Activated T-helper 1 cell treated with anti-CD3 and anti-CD28 coated beads, Interleukin-12 subunit alpha, Interleukin-12 subunit beta, Interleukin-2, Interleukin-4 antibody, amounts not matched to agents 30 ng/mL and 10 ng/mL and 1 ng/mL, durations not matched to agents 14 hours and 24 hours and 36 hours (primary cell): ENCODE measurements at regions of chr16 and their contacts with region 1.

Region 1: DNA sequence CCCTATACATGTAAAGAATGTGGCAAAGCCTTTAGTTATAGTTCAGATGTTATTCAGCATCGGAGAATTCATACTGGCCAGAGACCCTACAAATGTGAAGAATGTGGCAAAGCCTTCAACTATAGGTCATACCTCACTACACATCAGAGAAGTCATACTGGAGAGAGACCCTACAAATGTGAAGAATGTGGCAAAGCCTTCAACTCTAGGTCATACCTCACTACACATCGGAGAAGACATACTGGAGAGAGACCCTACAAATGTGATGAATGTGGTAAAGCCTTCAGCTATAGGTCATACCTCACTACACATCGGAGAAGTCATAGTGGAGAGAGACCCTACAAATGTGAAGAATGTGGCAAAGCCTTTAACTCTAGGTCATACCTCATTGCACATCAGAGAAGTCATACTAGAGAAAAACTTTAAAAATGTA is 42.5 kb downstream of the ZNF267 start:
- DNase-seq: no peak
- H3K4me3 Mint-ChIP-seq: no peak overlapping the region
- H3K27ac Mint-ChIP-seq: peak overlapping the region; percentile 68
- H3K4me1 Mint-ChIP-seq: peaks cover 13% of the 10 kb centered on the region
- H3K27me3 Mint-ChIP-seq: no peaks in the 10 kb centered on the region

Region 2: GRCh38 chr16:31819386-31819785 is 96.7 kb before region 1 on chr16:
- intact Hi-C with region 1: no loop called
- DNase-seq: no peak
- H3K4me3 Mint-ChIP-seq: no peak overlapping the region
- H3K27ac Mint-ChIP-seq: no peak overlapping the region
- H3K4me1 Mint-ChIP-seq: no peaks in the 10 kb centered on the region
- H3K27me3 Mint-ChIP-seq: peaks cover 5% of the 10 kb centered on the region

Region 3: DNA sequence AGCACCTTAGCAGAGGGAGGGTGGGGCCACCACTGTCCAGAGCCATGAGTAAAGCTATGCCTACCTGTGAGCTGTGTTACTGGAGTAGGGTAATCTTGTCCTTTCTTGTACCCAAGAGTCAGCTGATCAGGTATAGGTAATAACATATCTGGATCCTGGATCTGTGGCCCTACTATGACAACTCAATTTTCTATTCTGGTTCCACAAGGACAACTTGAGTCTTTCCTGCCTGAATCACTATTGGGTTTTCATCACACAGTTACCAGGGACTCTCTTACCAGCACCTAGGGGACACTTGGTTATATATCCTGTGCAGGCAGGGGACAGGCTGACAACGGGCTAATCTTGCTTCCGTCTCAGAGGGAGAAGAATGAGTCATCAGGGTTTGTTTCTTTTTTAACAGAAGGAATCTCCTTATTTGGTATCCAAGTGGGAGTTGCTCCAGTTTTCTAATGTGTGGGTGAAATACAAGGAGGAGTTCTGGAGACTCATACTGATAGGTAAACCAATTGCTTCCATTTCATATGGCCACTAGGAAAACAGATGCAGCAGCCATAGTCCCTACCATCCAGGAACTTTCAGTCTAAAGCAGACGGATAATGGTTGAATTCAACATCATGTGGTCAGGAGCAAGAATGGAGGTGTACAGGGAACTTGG is 35.6 kb before region 1 on chr16:
- intact Hi-C with region 1: loop called (anchors 5 kb)
- DNase-seq: peak; percentile 46
- H3K4me3 Mint-ChIP-seq: peak overlapping the region; percentile 96
- H3K27ac Mint-ChIP-seq: peak overlapping the region; percentile 84
- H3K4me1 Mint-ChIP-seq: peaks cover 77% of the 10 kb centered on the region
- H3K27me3 Mint-ChIP-seq: no peaks in the 10 kb centered on the region

Region 4: GRCh38 chr16:31899505-31899904 is 16.6 kb before region 1 on chr16:
- intact Hi-C with region 1: loop called (anchors 2 kb)
- DNase-seq: no peak
- H3K4me3 Mint-ChIP-seq: peak overlapping the region; percentile 1
- H3K27ac Mint-ChIP-seq: peak overlapping the region; percentile 61
- H3K4me1 Mint-ChIP-seq: peaks cover 16% of the 10 kb centered on the region
- H3K27me3 Mint-ChIP-seq: peaks cover 1% of the 10 kb centered on the region